CD4-positive, alpha-beta memory T cell (primary cell): ENCODE measurements at regions of chr13 and their contacts with region 1.

Region 1: DNA sequence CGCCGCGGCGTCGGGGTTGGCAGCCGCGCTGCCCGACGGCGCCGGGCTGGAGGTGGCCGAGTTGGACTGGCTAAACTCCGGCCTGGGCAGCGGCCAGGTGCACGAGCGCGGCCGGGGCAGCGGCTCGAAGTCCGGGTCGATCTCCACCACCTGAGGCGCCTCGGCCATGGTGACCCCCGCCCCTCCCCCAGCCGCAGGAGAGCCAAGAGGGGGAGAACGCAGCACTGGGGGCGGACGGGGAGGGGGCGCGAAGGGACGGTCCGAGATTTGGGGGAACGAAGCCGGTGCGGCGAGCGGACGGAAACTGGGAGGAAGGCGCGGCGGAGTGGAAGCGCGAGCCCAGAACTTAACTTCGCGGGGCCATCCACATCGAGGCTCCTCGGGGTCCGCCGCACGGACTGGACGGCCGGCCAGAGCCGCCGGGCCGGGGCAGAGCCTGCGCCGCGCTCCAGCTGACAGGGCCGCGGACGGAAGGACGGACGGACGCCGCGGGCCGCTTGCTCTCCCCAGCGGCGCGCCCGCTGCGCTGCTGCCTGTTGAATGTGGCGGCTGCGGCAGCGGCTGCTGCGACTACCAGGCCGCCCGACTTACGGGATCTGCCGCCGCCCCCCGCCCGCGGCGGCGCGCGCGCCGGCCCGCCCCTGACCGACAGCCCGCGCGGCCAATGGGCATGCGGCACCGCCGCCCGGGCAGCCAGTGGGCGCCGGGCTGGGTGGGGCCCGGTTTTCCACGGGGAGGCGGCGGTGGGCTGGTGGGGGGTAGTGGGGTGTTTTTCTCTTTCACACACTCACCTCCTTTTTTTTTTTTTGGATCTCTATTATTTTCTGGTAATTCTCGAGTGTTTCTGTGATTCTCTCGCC is at the start of gene FOXO1:
- DNase-seq: peak; percentile 89 to 95 (median 94)
- H3K4me3 ChIP-seq: peak within 1 kb of the TSS; percentile 61 to 92
- H3K4me3 Mint-ChIP-seq: peak within 1 kb of the TSS; percentile 91 to 97 (median 94)
- H3K27ac ChIP-seq: peak within 1 kb of the TSS; percentile 86
- H3K27ac Mint-ChIP-seq: peak within 1 kb of the TSS; percentile 92 to 97 (median 94)
- H3K4me1 ChIP-seq: peaks cover 31% of the 10 kb centered on the region
- H3K4me1 Mint-ChIP-seq: peaks cover 22 to 45% (median 30%) of the 10 kb centered on the region in 4 donors
- H3K27me3 ChIP-seq: no peaks in the 10 kb centered on the region
- H3K27me3 Mint-ChIP-seq: no peaks in the 10 kb centered on the region
- total RNA-seq, gene FOXO1: 68.0 to 68.4 TPM

Region 2: GRCh38 chr13:39942552-39943273 is 723.6 kb before region 1 on chr13:
- CTCF ChIA-PET with region 1: interaction called, 8 read pairs
- POLR2A ChIA-PET with region 1: interaction called, 3 read pairs
- intact Hi-C with region 1: loop called (anchors 5 kb)
- DNase-seq: peak; percentile 55 to 67 (median 63)
- H3K4me3 ChIP-seq: no peak overlapping the region
- H3K4me3 Mint-ChIP-seq: peak overlapping the region in 1 of 8 donors; percentile 20
- H3K27ac ChIP-seq: no peak overlapping the region
- H3K27ac Mint-ChIP-seq: peak overlapping the region in 1 of 7 donors; percentile 43
- H3K4me1 ChIP-seq: no peaks in the 10 kb centered on the region
- H3K4me1 Mint-ChIP-seq: peaks cover 3 to 13% (median 6%) of the 10 kb centered on the region in 4 donors
- H3K27me3 ChIP-seq: no peaks in the 10 kb centered on the region
- H3K27me3 Mint-ChIP-seq: peaks cover 0 to 1% of the 10 kb centered on the region in 2 donors

Region 3: DNA sequence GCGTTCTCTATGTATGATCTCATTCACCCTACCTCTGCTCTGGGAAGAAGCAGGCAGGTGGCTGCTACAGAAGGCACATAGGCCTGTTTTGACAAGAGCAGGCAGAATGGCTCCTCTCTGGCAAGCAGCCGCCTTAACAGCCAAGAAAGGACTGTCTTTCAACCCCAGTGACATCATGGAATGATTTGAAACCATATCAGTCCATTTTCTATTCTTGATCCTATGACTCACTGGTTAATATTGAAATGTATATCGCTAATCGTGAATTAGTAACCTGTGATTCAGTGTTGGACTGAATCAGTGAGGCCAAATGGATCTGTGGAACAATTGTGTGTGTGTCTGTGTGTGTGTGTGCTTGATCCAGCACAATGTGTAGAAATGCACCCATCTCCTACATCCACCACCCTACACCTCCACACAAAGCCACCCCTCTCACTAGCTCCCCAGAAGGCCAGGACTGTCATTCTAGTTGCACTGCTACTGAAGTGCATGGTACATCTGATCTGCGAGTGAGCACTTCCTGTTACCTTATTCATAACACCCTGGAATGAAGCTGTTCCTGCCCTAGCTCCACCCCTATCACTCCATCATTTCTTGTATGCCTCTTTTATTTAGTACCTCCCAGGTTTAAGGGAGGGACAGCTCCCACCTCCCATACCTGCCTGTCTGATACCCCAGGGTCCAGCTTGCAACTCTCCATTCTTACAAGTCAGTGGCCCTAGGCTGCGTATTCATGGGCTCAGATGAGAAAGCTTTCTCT is 459.9 kb before region 1 on chr13:
- CTCF ChIA-PET with region 1: no interaction called
- POLR2A ChIA-PET with region 1: interaction called, 27 read pairs
- intact Hi-C with region 1: no loop called
- DNase-seq: peak; percentile 56 to 70 (median 65)
- H3K4me3 ChIP-seq: peak overlapping the region in 1 of 2 donors; percentile 21
- H3K4me3 Mint-ChIP-seq: peak overlapping the region; percentile 46 to 89 (median 78)
- H3K27ac ChIP-seq: peak overlapping the region; percentile 53
- H3K27ac Mint-ChIP-seq: peak overlapping the region; percentile 90 to 99 (median 98)
- H3K4me1 ChIP-seq: peaks cover 60% of the 10 kb centered on the region
- H3K4me1 Mint-ChIP-seq: peaks cover 47 to 81% (median 61%) of the 10 kb centered on the region in 4 donors
- H3K27me3 ChIP-seq: no peaks in the 10 kb centered on the region
- H3K27me3 Mint-ChIP-seq: no peaks in the 10 kb centered on the region

Region 4: DNA sequence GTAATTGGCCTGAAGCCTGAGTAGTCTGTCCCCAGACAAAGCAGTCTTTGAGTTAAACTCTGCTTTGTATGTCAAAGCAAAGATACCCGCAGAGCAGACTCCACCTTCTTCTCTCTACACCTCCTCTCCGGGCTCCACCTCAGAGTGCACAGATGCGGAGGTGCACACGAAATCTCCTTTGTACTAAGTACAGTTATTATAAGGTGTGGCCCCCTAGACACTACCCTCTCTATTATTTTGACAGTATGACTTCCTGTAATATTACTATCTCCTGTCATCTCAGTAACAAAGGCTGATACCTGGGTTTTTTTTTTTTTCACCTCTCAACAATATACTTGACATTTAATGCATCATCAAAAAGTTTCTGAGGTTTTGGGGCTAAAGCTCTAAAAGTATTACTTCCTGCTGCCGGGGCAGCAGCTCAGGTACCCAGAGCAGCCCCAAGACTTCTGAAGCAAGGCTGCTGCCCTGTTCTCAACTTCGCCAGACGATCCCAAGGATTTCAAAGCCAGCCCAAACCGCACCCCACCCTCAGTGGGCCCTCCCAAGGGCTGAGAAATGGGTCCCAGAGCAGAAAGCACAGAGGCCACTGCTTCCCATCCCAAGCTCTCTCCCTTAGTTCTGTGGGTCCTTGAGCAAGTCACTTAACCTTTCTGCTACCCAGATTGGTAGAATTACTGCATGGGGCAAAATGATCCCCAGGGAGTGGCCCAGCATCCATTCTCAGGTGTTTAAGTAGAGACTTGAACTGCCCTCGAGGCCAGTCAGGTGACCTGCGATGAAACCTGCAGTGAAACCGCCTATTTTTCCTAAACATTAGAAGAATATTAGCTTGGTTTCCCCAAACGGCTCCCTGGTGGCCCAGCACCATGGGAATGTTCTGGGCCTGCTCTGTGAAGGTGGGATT is 180.4 kb before region 1 on chr13:
- CTCF ChIA-PET with region 1: interaction called, 4 read pairs
- POLR2A ChIA-PET with region 1: interaction called, 70 read pairs
- intact Hi-C with region 1: loop called (anchors 1 kb)
- DNase-seq: peak; percentile 81 to 92 (median 91)
- H3K4me3 ChIP-seq: peak overlapping the region; percentile 0 to 29
- H3K4me3 Mint-ChIP-seq: peak overlapping the region; percentile 59 to 93 (median 82)
- H3K27ac ChIP-seq: peak overlapping the region; percentile 68
- H3K27ac Mint-ChIP-seq: peak overlapping the region; percentile 89 to 99 (median 98)
- H3K4me1 ChIP-seq: peaks cover 87% of the 10 kb centered on the region
- H3K4me1 Mint-ChIP-seq: peaks cover 53 to 96% (median 85%) of the 10 kb centered on the region in 4 donors
- H3K27me3 ChIP-seq: no peaks in the 10 kb centered on the region
- H3K27me3 Mint-ChIP-seq: no peaks in the 10 kb centered on the region

Region 5: DNA sequence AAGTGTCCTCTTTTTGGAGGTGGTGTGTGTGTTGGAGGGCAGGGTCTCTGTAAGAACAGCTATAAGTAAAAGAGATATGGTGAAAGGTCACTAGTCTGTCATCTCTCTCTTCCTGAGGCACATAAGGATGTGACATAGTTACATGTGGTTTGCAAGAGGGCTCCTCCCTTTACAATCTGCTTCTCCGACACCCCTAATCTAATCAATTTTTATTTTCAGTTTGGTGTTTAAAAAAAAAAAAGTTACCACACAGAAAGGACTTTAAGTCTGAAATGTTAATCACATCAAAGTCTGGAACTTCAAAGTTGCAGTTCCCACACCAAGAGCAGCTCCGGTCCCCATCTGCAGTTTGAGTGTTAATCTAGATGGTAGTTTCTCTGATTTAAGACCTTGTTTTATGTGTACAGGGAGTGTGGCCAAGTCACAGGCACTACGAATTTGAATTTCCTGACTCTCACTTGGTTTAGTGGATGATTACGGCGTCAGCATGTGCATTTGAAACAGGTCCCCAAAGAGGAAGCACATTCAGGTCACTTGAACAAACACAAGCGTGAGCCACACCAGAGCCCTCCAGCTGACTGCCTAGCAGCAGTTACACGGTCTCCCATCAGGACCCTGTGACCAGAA is 53.0 kb before region 1 on chr13:
- CTCF ChIA-PET with region 1: no interaction called
- POLR2A ChIA-PET with region 1: interaction called, 49 read pairs
- intact Hi-C with region 1: loop called (anchors 1 kb)
- DNase-seq: peak; percentile 78 to 85 (median 84)
- H3K4me3 ChIP-seq: peak overlapping the region in 1 of 2 donors; percentile 43
- H3K4me3 Mint-ChIP-seq: peak overlapping the region; percentile 81 to 94 (median 86)
- H3K27ac ChIP-seq: peak overlapping the region; percentile 68
- H3K27ac Mint-ChIP-seq: peak overlapping the region; percentile 89 to 99 (median 95)
- H3K4me1 ChIP-seq: peaks cover 96% of the 10 kb centered on the region
- H3K4me1 Mint-ChIP-seq: peaks cover 68 to 97% (median 88%) of the 10 kb centered on the region in 4 donors
- H3K27me3 ChIP-seq: no peaks in the 10 kb centered on the region
- H3K27me3 Mint-ChIP-seq: no peaks in the 10 kb centered on the region

Region 6: GRCh38 chr13:40682449-40683240 is 16.4 kb after region 1 on chr13:
- CTCF ChIA-PET with region 1: interaction called, 24 read pairs
- POLR2A ChIA-PET with region 1: interaction called, 6 read pairs
- intact Hi-C with region 1: no loop called
- DNase-seq: peak in 4 of 5 donors; percentile 44 to 58 (median 52)
- H3K4me3 ChIP-seq: no peak overlapping the region
- H3K4me3 Mint-ChIP-seq: peak overlapping the region in 1 of 8 donors; percentile 46
- H3K27ac ChIP-seq: no peak overlapping the region
- H3K27ac Mint-ChIP-seq: peak overlapping the region in 1 of 7 donors; percentile 48
- H3K4me1 ChIP-seq: peaks cover 4% of the 10 kb centered on the region
- H3K4me1 Mint-ChIP-seq: peaks cover 5 to 8% (median 6%) of the 10 kb centered on the region in 4 donors
- H3K27me3 ChIP-seq: no peaks in the 10 kb centered on the region
- H3K27me3 Mint-ChIP-seq: no peaks in the 10 kb centered on the region